ENCODE measurements at regions of chr3 and their contacts with region 1.

Region 1: GRCh38 chr3:108292905-108293328 is 3.4 kb upstream of the HHLA2 start:
- DNase-seq: peak; percentile 45
- H3K4me3 Mint-ChIP-seq: no peak overlapping the region
- H3K27ac Mint-ChIP-seq: peak overlapping the region; percentile 70
- H3K4me1 Mint-ChIP-seq: peaks cover 55% of the 10 kb centered on the region
- H3K27me3 Mint-ChIP-seq: no peaks in the 10 kb centered on the region

Region 2: GRCh38 chr3:107522510-107523288 is 770.2 kb before region 1 on chr3 and contains the start of gene BBX:
- CTCF ChIA-PET with region 1: no interaction called
- intact Hi-C with region 1: loop called (anchors 2 kb)
- DNase-seq: peak; percentile 94
- H3K4me3 Mint-ChIP-seq: peak within 1 kb of the TSS; percentile 92
- H3K27ac Mint-ChIP-seq: peak within 1 kb of the TSS; percentile 94
- H3K4me1 Mint-ChIP-seq: peaks cover 23% of the 10 kb centered on the region
- H3K27me3 Mint-ChIP-seq: no peaks in the 10 kb centered on the region
- total RNA-seq, gene BBX: 43.1 to 48.6 TPM

Region 3: GRCh38 chr3:108124337-108125152 is 168.4 kb before region 1 on chr3:
- CTCF ChIA-PET with region 1: no interaction called
- intact Hi-C with region 1: loop called (anchors 1 kb)
- DNase-seq: peak; percentile 84
- H3K4me3 Mint-ChIP-seq: peak overlapping the region; percentile 90
- H3K27ac Mint-ChIP-seq: peak overlapping the region; percentile 100
- H3K4me1 Mint-ChIP-seq: peaks cover 56% of the 10 kb centered on the region
- H3K27me3 Mint-ChIP-seq: no peaks in the 10 kb centered on the region

Region 4: GRCh38 chr3:108342837-108343478 is 50.0 kb after region 1 on chr3:
- CTCF ChIA-PET with region 1: no interaction called
- intact Hi-C with region 1: loop called (anchors 2 kb)
- DNase-seq: no peak
- H3K4me3 Mint-ChIP-seq: no peak overlapping the region
- H3K27ac Mint-ChIP-seq: no peak overlapping the region
- H3K4me1 Mint-ChIP-seq: peaks cover 13% of the 10 kb centered on the region
- H3K27me3 Mint-ChIP-seq: no peaks in the 10 kb centered on the region

Region 5: DNA sequence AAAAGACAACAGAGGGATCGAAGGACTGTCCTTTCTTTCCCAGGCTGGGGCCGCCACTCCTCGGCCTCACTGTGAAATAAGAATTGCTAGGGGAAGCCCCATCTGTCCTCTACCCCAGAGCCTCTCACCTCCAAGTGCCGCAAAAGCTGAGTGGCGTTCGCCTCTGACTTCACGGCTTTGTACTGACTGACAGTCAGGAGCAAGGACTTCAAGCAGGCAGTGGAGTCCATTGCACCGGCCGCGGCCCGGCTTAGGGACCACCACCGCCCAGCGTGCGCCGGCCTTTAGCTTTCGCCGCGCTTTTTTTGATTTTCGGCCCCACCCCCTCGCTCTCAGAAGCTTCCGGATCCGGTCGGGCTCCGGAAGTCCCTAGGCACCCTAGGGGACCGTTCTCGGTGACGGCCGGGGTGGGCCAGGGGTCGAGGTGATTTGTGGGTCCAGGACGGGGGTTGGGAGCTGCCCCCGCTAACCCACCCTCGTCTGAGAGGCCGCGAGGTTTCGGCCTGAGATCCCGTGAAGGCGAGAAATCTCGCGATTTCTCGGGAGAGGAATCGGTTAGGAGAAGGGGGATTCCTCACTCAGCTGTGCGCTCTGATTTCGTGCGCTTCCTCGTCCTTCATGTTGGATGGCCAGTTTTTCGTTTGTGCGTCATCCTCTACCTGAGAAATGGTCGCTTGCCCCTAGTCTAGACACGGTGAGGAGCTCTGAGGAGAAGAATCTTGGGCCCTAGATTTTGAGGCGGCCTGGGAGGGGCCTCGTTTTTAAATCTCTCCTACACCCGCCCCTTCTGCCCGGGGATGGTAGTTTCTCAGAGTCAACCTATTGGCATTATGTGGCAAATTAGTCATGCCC is 296.5 kb after region 1 on chr3 and contains the starts of genes CIP2A and DZIP3:
- CTCF ChIA-PET with region 1: no interaction called
- intact Hi-C with region 1: loop called (anchors 10 kb)
- DNase-seq: peak; percentile 84
- H3K4me3 Mint-ChIP-seq: peak within 1 kb of the TSS; percentile 95
- H3K27ac Mint-ChIP-seq: peak within 1 kb of the TSS; percentile 99
- H3K4me1 Mint-ChIP-seq: peaks cover 36% of the 10 kb centered on the region
- H3K27me3 Mint-ChIP-seq: no peaks in the 10 kb centered on the region
- total RNA-seq, gene CIP2A: 34.7 to 39.9 TPM
- total RNA-seq, gene DZIP3: 11.2 to 12.2 TPM

Measured in activated naive CD4-positive, alpha-beta T cell treated with anti-CD3 and anti-CD28 coated beads for 36 hours (primary cell).